Activated naive CD4-positive, alpha-beta T cell treated with anti-CD3 and anti-CD28 coated beads, Interleukin-2, amount 10 ng/mL, durations not matched to agents 7 days and 5 days (primary cell): ENCODE measurements at regions of chr14 and their contacts with region 1.

Region 1: DNA sequence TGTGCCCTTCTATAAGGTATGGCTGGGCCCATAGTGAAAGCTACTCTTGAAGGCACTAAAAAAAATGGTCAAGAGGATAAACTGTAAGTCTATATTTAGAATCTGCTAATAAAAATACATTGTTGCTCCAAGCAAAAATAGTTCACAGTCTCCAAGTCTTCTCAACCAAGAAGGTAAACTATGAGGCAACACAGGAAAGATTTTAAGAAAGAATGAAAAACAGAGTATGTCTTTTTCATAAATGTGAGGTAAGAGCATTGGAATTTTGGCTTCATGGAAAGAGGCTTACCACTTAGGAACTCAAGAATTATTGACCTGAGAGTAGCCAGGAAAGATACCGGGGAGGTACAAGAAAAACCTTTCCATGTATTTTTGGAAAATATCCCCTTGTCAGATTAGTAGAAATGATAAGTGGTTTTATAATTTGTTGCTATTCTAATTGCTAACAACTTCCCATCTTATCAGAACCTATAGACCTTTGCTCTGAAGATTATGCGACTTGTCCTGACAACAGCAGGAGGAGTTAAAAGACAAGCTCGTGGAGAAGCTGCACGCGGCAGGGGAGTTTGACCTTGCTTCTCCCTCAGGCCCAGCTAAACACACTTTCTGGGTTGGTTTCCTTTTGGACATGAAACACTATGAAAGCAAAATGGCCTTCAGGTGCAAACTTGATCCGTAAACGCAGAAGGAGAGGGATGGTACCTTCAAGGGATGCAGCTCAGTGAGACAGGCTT is 238.1 kb downstream of the FOXN3 start:
- DNase-seq: no peak
- H3K4me3 Mint-ChIP-seq: no peak overlapping the region
- H3K27ac Mint-ChIP-seq: no peak overlapping the region
- H3K4me1 Mint-ChIP-seq: peaks cover 8% of the 10 kb centered on the region
- H3K27me3 Mint-ChIP-seq: no peaks in the 10 kb centered on the region

Region 2: GRCh38 chr14:89000007-89000942 is 178.7 kb before region 1 on chr14:
- CTCF ChIA-PET with region 1: no interaction called
- DNase-seq: no peak
- H3K4me3 Mint-ChIP-seq: no peak overlapping the region
- H3K27ac Mint-ChIP-seq: no peak overlapping the region
- H3K4me1 Mint-ChIP-seq: no peaks in the 10 kb centered on the region
- H3K27me3 Mint-ChIP-seq: peaks cover 3% of the 10 kb centered on the region

Region 3: GRCh38 chr14:89190765-89191513 is 12.0 kb after region 1 on chr14:
- CTCF ChIA-PET with region 1: interaction called, 15 read pairs
- DNase-seq: no peak
- H3K4me3 Mint-ChIP-seq: no peak overlapping the region
- H3K27ac Mint-ChIP-seq: no peak overlapping the region
- H3K4me1 Mint-ChIP-seq: no peaks in the 10 kb centered on the region
- H3K27me3 Mint-ChIP-seq: no peaks in the 10 kb centered on the region

Region 4: GRCh38 chr14:89270439-89271227 is 91.7 kb after region 1 on chr14:
- CTCF ChIA-PET with region 1: no interaction called
- DNase-seq: no peak
- H3K4me3 Mint-ChIP-seq: no peak overlapping the region
- H3K27ac Mint-ChIP-seq: no peak overlapping the region
- H3K4me1 Mint-ChIP-seq: peaks cover 8% of the 10 kb centered on the region
- H3K27me3 Mint-ChIP-seq: no peaks in the 10 kb centered on the region

Region 5: DNA sequence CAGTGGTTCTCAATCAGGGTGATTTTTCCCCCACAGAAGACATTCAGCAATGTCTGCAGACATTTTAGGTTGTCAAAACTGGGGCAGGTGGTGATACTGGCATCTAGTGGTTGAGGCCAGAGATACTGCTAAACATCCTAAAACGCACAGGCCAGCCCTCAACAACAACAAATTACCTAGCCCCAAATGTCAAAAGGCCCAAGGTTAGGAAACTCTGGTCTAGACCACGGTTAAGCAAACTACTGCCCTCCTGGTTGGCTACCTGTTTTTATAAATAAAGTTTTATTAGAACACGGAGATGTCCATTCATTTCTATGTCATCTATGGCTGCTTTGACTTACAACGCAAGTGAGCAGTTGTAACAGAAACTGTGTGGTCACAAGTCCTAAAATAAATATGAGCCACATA is 588.9 kb after region 1 on chr14:
- CTCF ChIA-PET with region 1: interaction called, 11 read pairs
- DNase-seq: peak; percentile 81
- H3K4me3 Mint-ChIP-seq: no peak overlapping the region
- H3K27ac Mint-ChIP-seq: peak overlapping the region; percentile 9
- H3K4me1 Mint-ChIP-seq: peaks cover 39% of the 10 kb centered on the region
- H3K27me3 Mint-ChIP-seq: peaks cover 8% of the 10 kb centered on the region